Psoas muscle (tissue), 8 donors: ENCODE measurements at regions of chr3 and their contacts with region 1.

Region 1: GRCh38 chr3:100737334-100737733 is 28.0 kb downstream of the TFG start:
- DNase-seq: no peak
- ATAC-seq: peak in 2 of 4 donors; percentile 48 to 77
- H3K4me3 ChIP-seq: no peak overlapping the region
- H3K27ac ChIP-seq: no peak overlapping the region
- H3K4me1 ChIP-seq: peaks cover 32% of the 10 kb centered on the region
- H3K27me3 ChIP-seq: no peaks in the 10 kb centered on the region
- CTCF ChIP-seq: peak; percentile 41

Region 2: DNA sequence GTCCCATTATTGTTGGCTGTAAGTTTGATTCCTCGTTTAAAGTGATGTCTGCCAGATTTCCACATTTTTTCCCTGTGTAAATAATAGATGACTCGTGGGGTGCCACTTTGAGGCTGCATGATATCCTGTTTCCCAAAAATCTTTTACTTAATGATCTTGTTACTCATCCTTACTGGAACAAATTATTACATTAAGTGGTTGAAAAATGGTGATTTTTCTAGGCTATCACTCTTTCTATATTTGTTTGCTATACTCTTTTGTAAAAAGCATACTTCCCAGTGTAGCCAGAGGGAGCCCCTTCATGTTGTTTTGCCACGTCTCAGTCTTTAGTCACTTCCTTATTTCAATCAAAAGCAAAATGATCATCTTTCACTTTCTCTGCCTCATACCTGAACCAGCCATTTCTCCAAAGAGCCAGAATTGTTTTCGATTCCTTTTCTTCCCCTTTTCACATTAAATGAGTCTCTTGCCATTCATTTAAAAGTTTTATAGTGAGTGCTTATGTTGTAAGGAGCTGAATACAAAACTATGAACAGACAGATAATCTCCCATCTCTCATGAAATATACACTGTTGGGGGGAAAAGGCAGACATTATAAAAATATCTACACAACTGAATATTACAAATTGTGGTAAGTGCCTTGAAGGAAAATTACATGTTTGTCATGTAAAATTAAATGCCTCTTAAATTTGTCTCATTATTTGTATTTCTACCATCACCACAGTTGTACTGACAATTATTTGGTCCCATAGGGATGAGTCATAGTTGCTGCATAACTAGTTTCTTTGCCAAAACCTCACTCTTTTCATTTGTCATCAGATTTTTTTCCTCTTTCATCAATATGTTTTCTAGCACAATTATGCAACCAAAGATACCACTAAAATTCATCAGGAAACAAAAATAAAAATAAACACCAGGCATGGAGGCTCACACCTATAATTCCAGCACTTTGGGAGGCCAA is 86.4 kb before region 1 on chr3:
- intact Hi-C with region 1: loop called in 1 of 2 experiments (anchors 1 kb)
- DNase-seq: no peak
- ATAC-seq: peak in 1 of 4 donors; percentile 50
- H3K4me3 ChIP-seq: no peak overlapping the region
- H3K27ac ChIP-seq: no peak overlapping the region
- H3K4me1 ChIP-seq: no peaks in the 10 kb centered on the region
- H3K27me3 ChIP-seq: no peaks in the 10 kb centered on the region
- CTCF ChIP-seq: peak; percentile 5

Region 3: DNA sequence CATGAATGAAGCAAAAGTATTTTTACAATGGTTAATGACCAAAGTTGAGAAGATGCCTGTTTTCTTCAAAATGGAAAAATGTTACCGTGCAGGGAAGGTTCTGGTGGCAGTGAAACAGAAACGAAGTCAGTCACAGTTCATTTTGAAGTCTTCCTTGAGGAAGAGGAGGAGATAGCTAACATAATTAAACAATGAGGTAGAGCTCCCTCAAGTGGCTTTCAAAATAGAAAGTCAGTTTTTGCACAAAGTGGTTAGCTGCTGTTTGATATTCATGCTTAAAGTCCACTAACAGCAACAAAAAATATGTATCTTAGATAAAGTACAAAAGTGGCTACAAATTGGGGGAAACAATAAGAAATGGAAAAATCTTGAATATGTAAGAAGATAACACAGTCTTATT is 59.2 kb after region 1 on chr3:
- intact Hi-C with region 1: loop called (anchors 5 kb)
- DNase-seq: no peak
- ATAC-seq: peak in 1 of 4 donors; percentile 68
- H3K4me3 ChIP-seq: no peak overlapping the region
- H3K27ac ChIP-seq: no peak overlapping the region
- H3K4me1 ChIP-seq: no peaks in the 10 kb centered on the region
- H3K27me3 ChIP-seq: no peaks in the 10 kb centered on the region
- CTCF ChIP-seq: peak; percentile 37